ENCODE measurements at regions of chr5 and their contacts with region 1.

Region 1: DNA sequence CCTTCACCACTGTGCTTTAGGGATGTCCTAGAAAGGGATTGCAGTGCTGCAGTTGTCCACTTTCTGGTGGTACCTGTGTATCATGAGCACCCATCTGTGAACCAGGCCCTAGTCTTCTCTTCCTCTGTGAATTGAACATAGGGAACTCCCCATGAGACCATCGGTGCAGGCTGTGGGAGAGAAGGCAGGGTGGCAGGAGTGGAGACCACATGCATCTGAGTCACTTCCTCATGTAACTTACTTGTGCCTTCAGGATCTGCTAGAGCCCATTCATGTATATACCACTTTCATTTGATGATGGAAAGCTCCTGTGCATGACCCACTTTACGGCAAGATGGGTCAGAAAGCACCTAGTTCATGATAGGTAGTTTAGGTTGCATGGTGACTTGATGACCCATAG is 478.1 kb upstream of the CDH9 start:
- DNase-seq: no peak
- ATAC-seq: no peak
- H3K4me3 ChIP-seq: no peak overlapping the region
- H3K27ac ChIP-seq: no peak overlapping the region
- H3K4me1 ChIP-seq: no peaks in the 10 kb centered on the region
- H3K27me3 ChIP-seq: no peaks in the 10 kb centered on the region
- CTCF ChIP-seq: no peak
- EP300 ChIP-seq: no peak
- POLR2A ChIP-seq: no peak
- RAD21 ChIP-seq: no peak

Region 2: GRCh38 chr5:27502236-27502635 is 14.2 kb before region 1 on chr5:
- CTCF ChIA-PET with region 1: no interaction called
- POLR2A ChIA-PET with region 1: no interaction called
- in situ Hi-C with region 1: no loop called
- intact Hi-C with region 1: no loop called
- DNase-seq: no peak
- ATAC-seq: no peak
- H3K4me3 ChIP-seq: no peak overlapping the region
- H3K27ac ChIP-seq: no peak overlapping the region
- H3K4me1 ChIP-seq: no peaks in the 10 kb centered on the region
- H3K27me3 ChIP-seq: no peaks in the 10 kb centered on the region
- CTCF ChIP-seq: no peak
- EP300 ChIP-seq: no peak
- POLR2A ChIP-seq: no peak
- RAD21 ChIP-seq: no peak

Region 3: DNA sequence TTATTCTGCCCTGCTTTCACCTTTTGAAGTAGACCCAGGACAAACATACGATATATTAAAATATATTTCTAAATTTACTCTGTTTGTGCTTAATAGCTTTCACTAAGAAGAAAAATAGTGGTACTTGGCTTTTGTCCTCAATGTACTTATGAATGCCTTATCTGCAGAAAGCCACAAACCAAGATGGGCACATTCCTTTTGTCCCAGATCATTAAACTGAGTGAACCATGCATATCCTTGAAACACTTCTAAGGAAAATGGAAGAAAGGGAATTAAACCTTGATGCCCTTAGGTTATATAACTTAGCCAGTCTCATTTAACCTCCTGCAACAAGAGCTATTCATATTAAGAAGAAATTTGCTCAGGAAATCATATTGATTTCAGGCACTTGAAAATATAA is 75.8 kb after region 1 on chr5:
- CTCF ChIA-PET with region 1: no interaction called
- POLR2A ChIA-PET with region 1: no interaction called
- in situ Hi-C with region 1: loop called (anchors 5 kb)
- intact Hi-C with region 1: no loop called
- DNase-seq: no peak
- ATAC-seq: no peak
- H3K4me3 ChIP-seq: no peak overlapping the region
- H3K27ac ChIP-seq: no peak overlapping the region
- H3K4me1 ChIP-seq: no peaks in the 10 kb centered on the region
- H3K27me3 ChIP-seq: no peaks in the 10 kb centered on the region; a peak in 1 of 5 replicates
- CTCF ChIP-seq: no peak
- EP300 ChIP-seq: no peak
- POLR2A ChIP-seq: no peak
- RAD21 ChIP-seq: no peak